ENCODE measurements at regions of chr15 and their contacts with region 1.

Region 1: DNA sequence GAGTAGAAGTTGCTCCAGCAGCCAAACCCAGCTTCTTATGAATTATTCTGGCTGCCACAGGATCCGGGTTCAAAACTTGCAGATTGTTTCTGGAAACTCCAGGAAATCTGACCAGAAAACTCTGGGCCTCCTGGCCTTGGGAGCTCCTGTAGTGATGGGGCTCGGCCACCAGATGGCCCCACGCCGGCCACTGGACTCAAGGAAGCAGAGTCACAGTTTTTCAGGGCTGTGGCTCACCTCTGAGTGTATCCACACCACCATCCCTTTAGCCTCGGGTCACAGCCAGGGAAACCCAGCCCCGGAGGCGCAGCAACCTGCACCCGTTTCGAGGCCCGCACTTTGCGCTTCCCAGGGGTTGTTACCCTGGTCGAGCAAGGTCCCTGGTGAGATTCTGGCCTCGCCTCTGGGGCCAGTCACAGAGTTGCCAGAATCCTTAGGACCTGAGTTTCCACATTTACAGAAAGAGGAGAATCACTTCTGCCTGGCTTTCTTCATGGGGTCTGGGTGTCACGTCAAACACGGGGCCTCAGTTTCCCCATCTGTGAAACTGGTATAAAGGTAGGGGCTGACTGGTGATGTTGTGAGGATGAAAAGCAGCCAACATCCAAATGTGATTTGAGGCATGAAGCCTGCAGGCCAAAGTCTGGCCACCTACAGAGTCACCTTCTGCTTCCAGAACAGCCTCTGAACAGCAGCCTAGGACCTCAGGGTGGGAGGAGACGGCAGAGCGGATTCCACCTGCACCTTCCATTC is 53.5 kb upstream of the LCTL start:
- H3K4me3 ChIP-seq: no peak overlapping the region
- H3K27ac ChIP-seq: no peak overlapping the region
- H3K4me1 ChIP-seq: no peaks in the 10 kb centered on the region
- CTCF ChIP-seq: peak; percentile 75

Region 2: GRCh38 chr15:66631616-66632263 is 12.4 kb after region 1 on chr15:
- CTCF ChIA-PET with region 1: interaction called, 22 read pairs
- POLR2A ChIA-PET with region 1: no interaction called
- H3K4me3 ChIP-seq: no peak overlapping the region
- H3K27ac ChIP-seq: no peak overlapping the region
- H3K4me1 ChIP-seq: no peaks in the 10 kb centered on the region
- CTCF ChIP-seq: no peak

Region 3: GRCh38 chr15:66679657-66680108 is 60.4 kb after region 1 on chr15:
- CTCF ChIA-PET with region 1: interaction called, 13 read pairs
- POLR2A ChIA-PET with region 1: no interaction called
- H3K4me3 ChIP-seq: no peak overlapping the region
- H3K27ac ChIP-seq: peak overlapping the region; percentile 18; the same call in 1 of the 2 replicates
- H3K4me1 ChIP-seq: 0 out of 2 replicates have a peak, but pooled peaks cover 4% of the 10 kb centered on the region
- CTCF ChIP-seq: no peak

Region 4: GRCh38 chr15:66700802-66701421 is 81.6 kb after region 1 on chr15:
- CTCF ChIA-PET with region 1: interaction called, 40 read pairs
- POLR2A ChIA-PET with region 1: interaction called, 12 read pairs
- H3K4me3 ChIP-seq: peak overlapping the region; percentile 57
- H3K27ac ChIP-seq: peak overlapping the region; percentile 96
- H3K4me1 ChIP-seq: peaks cover 16% of the 10 kb centered on the region
- CTCF ChIP-seq: no peak

Region 5: GRCh38 chr15:66774001-66774814 is 154.9 kb after region 1 on chr15:
- CTCF ChIA-PET with region 1: interaction called, 29 read pairs
- POLR2A ChIA-PET with region 1: no interaction called
- H3K4me3 ChIP-seq: no peak overlapping the region
- H3K27ac ChIP-seq: no peak overlapping the region
- H3K4me1 ChIP-seq: peaks cover 23% of the 10 kb centered on the region
- CTCF ChIP-seq: peak; percentile 99

Measured in HEK293 (cell line).